ENCODE measurements at regions of chr13 and their contacts with region 1.

Region 1: GRCh38 chr13:19782049-19782726 is 557 bp downstream of the PSPC1 start:
- DNase-seq: peak; percentile 91
- H3K4me3 Mint-ChIP-seq: peak overlapping the region; percentile 96
- H3K27ac Mint-ChIP-seq: peak overlapping the region; percentile 99
- H3K4me1 Mint-ChIP-seq: peaks cover 6% of the 10 kb centered on the region
- H3K27me3 Mint-ChIP-seq: peaks cover 2% of the 10 kb centered on the region

Region 2: DNA sequence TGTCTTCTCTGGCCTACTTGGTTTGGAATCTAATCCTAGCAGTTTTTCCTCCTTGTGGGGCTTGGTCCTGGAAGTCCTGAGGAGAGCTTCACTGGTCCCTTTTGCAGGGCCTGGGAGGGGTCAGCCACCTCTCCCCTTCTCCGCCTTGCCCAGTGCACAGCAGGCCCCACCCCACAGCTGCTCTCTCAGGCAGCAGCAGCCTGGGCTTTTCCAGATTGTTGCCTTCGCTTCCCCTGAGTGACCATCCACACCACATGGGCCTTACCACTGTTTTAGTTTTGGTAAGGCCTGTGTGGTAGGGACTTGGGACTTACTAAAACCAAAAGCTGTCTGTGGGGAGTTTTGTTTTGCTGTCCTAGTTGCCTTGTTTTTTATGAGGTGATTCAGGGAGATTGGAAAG is 137.2 kb before region 1 on chr13:
- intact Hi-C with region 1: no loop called
- DNase-seq: no peak
- H3K4me3 Mint-ChIP-seq: no peak overlapping the region
- H3K27ac Mint-ChIP-seq: peak overlapping the region; percentile 20
- H3K4me1 Mint-ChIP-seq: peaks cover 8% of the 10 kb centered on the region
- H3K27me3 Mint-ChIP-seq: no peaks in the 10 kb centered on the region

Region 3: GRCh38 chr13:19742643-19743042 is 39.5 kb before region 1 on chr13:
- intact Hi-C with region 1: no loop called
- DNase-seq: no peak
- H3K4me3 Mint-ChIP-seq: no peak overlapping the region
- H3K27ac Mint-ChIP-seq: no peak overlapping the region
- H3K4me1 Mint-ChIP-seq: peaks cover 7% of the 10 kb centered on the region
- H3K27me3 Mint-ChIP-seq: no peaks in the 10 kb centered on the region

Region 4: GRCh38 chr13:19810996-19811891 is 29.1 kb after region 1 on chr13:
- intact Hi-C with region 1: no loop called
- DNase-seq: no peak
- H3K4me3 Mint-ChIP-seq: no peak overlapping the region
- H3K27ac Mint-ChIP-seq: no peak overlapping the region
- H3K4me1 Mint-ChIP-seq: no peaks in the 10 kb centered on the region
- H3K27me3 Mint-ChIP-seq: no peaks in the 10 kb centered on the region

Region 5: GRCh38 chr13:19852766-19853165 is 70.6 kb after region 1 on chr13:
- intact Hi-C with region 1: no loop called
- DNase-seq: no peak
- H3K4me3 Mint-ChIP-seq: no peak overlapping the region
- H3K27ac Mint-ChIP-seq: no peak overlapping the region
- H3K4me1 Mint-ChIP-seq: peaks cover 18% of the 10 kb centered on the region
- H3K27me3 Mint-ChIP-seq: no peaks in the 10 kb centered on the region

Region 6: GRCh38 chr13:20902438-20903163 is 1120.4 kb after region 1 on chr13 and contains the start of gene XPO4:
- intact Hi-C with region 1: loop called (anchors 10 kb)
- DNase-seq: peak; percentile 95
- H3K4me3 Mint-ChIP-seq: peak within 1 kb of the TSS; percentile 99
- H3K27ac Mint-ChIP-seq: peak within 1 kb of the TSS; percentile 97
- H3K4me1 Mint-ChIP-seq: peaks cover 26% of the 10 kb centered on the region
- H3K27me3 Mint-ChIP-seq: peaks cover 2% of the 10 kb centered on the region
- total RNA-seq, gene XPO4: 32.5 and 34.8 TPM in 2 replicates

Measured in activated CD4-positive, alpha-beta T cell treated with anti-CD3 and anti-CD28 coated beads, Interleukin-2, amount 10 ng/mL, durations not matched to agents 24 days and 14 days (primary cell).